H1 (cell line): ENCODE measurements at regions of chr20 and their contacts with region 1.

Region 1: GRCh38 chr20:52083627-52084232 is 107.8 kb downstream of the ZFP64 start:
- DNase-seq: peak; percentile 25 to 74
- H3K4me3 ChIP-seq: no peak overlapping the region
- H3K27ac ChIP-seq: no peak overlapping the region
- H3K4me1 ChIP-seq: peaks cover 0 to 2% (median 0%) of the 10 kb centered on the region in 4 experiments; a peak in 2 of 7 replicates
- H3K27me3 ChIP-seq: no peaks in the 10 kb centered on the region
- CTCF ChIP-seq: peak in 2 of 3 experiments; percentile 72 to 80; a peak in 3 of 4 replicates
- EP300 ChIP-seq: no peak
- POLR2A ChIP-seq: no peak
- RAD21 ChIP-seq: peak; percentile 96 to 97

Region 2: GRCh38 chr20:51639206-51639832 is 444.4 kb before region 1 on chr20:
- CTCF ChIA-PET with region 1: interaction called, 66 read pairs
- POLR2A ChIA-PET with region 1: no interaction called
- DNase-seq: peak; percentile 51 to 97
- H3K4me3 ChIP-seq: no peak overlapping the region
- H3K27ac ChIP-seq: no peak overlapping the region
- H3K4me1 ChIP-seq: no peaks in the 10 kb centered on the region
- H3K27me3 ChIP-seq: no peaks in the 10 kb centered on the region
- CTCF ChIP-seq: peak; percentile 77 to 98 (median 89)
- EP300 ChIP-seq: no peak
- POLR2A ChIP-seq: no peak
- RAD21 ChIP-seq: peak; percentile 97

Region 3: DNA sequence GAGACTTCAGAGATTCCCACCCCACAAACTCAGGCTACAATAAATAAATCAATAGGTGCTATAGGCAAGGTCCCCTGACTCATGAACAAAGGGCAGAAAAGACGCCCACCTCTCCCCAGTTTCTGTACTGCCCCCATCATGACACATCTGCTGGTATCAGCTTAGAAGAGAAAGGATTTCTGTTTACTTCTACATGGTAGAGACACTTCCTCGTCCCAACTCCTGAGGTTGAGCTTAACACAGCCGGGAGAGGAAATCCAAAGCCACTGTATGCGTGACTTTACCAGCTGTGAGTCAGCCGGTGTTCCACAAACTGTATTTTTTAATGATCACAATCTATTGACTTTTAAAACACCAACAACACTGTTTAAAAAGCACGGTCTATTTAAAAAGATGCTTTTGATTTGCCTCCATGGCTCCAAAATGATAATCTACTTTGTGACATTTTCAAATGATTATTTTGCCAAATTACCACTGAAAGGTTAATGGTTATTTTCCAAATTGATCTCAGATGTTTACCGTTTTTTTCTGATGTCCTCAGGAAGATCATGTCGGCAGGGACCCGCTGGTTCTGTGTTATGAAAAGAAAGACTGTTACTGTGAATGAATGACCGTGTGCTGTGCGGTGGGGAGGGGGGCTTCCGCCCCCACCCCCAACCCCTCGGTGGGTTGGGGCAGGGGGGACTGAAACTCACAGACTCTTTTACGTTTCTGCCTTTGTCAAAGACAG is 388.0 kb before region 1 on chr20:
- CTCF ChIA-PET with region 1: interaction called, 16 read pairs
- POLR2A ChIA-PET with region 1: no interaction called
- DNase-seq: no peak
- H3K4me3 ChIP-seq: peak overlapping the region in 2 of 4 experiments; percentile 23 to 35; a peak in 2 of 8 replicates
- H3K27ac ChIP-seq: peak overlapping the region; percentile 23; the same call in 1 of the 2 replicates
- H3K4me1 ChIP-seq: peaks cover 9 to 22% (median 17%) of the 10 kb centered on the region in 4 experiments; a peak in 6 of 7 replicates
- H3K27me3 ChIP-seq: no peaks in the 10 kb centered on the region
- CTCF ChIP-seq: no peak
- EP300 ChIP-seq: no peak
- POLR2A ChIP-seq: no peak
- RAD21 ChIP-seq: no peak

Region 4: DNA sequence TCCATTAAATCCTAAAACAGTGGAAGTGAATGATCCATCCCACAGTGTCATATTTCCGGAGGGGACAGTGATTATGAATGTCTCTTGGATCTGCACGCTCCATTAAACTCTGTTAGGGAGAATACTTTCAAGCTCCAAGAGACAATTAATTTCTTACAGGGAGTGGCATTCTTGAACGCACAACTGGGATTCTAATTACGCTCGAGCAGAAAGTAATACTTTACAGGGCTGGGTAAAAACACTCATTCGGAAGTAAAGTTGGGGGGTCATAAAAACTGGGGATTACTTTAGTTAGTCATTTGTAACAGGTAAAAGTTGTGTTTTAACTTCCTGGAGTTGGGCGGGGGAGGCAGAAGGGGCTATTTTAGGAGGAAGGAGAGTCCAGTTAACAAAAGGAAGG is 43.9 kb before region 1 on chr20:
- CTCF ChIA-PET with region 1: no interaction called
- POLR2A ChIA-PET with region 1: no interaction called
- DNase-seq: no peak
- H3K4me3 ChIP-seq: no peak overlapping the region
- H3K27ac ChIP-seq: no peak overlapping the region
- H3K4me1 ChIP-seq: no peaks in the 10 kb centered on the region
- H3K27me3 ChIP-seq: no peaks in the 10 kb centered on the region
- CTCF ChIP-seq: no peak
- EP300 ChIP-seq: no peak
- POLR2A ChIP-seq: no peak
- RAD21 ChIP-seq: no peak

Region 5: GRCh38 chr20:52060794-52061714 is 22.7 kb before region 1 on chr20:
- CTCF ChIA-PET with region 1: interaction called, 35 read pairs
- POLR2A ChIA-PET with region 1: interaction called, 3 read pairs
- DNase-seq: no peak
- H3K4me3 ChIP-seq: no peak overlapping the region
- H3K27ac ChIP-seq: no peak overlapping the region
- H3K4me1 ChIP-seq: peaks cover 0 to 3% (median under 1%) of the 10 kb centered on the region in 4 experiments; a peak in 2 of 7 replicates
- H3K27me3 ChIP-seq: no peaks in the 10 kb centered on the region
- CTCF ChIP-seq: peak; percentile 63 to 82 (median 76)
- EP300 ChIP-seq: no peak
- POLR2A ChIP-seq: no peak
- RAD21 ChIP-seq: peak; percentile 91 to 94